ENCODE measurements at regions of chr6 and their contacts with region 1.

Region 1: DNA sequence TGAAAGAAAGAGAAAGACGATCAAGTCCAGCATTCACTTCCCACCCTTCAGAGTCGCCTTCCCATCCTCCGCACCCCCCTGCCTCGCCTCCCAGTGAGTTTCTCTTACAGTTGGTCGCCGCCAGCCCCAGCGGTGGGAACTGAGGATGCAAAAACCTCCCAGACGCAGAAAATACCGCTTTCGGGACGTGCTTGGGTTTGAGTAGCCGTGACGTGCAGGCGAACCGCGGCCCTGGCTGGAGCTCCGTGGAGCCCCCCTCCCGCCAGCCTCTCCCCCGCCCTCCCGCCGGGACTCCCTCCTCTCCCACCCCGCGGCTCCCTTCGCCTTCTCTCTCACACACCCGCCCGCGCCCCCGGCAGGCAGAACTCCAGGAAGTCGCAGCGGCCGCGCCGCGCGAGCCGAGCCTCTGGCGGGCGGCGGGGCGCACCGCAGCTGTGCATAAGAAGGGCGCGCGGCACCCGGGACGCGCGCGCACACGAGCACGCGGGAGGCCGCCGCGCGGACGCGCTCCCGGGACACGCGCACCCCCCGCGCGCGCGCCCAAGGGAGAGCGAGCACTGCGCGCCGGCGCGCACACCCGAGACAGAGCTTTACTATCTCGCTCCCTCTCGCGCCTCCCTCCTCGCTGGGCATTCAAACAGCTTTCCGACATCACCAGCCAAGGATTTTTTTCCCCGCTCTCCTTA is at the start of gene ADGRB3:
- DNase-seq: peak; percentile 25 to 43
- ATAC-seq: peak; percentile 68 to 69
- H3K4me3 ChIP-seq: peak within 1 kb of the TSS; percentile 63 to 88 (median 70)
- H3K27ac ChIP-seq: peak within 1 kb of the TSS; percentile 66 to 75 (median 72)
- H3K4me1 ChIP-seq: peaks cover 0 to 18% of the 10 kb centered on the region in 2 donors
- H3K27me3 ChIP-seq: peaks cover 0 to 11% (median 3%) of the 10 kb centered on the region in 3 donors
- CTCF ChIP-seq: peak in 1 of 5 experiments; percentile 23
- POLR2A ChIP-seq: peak; percentile 26 to 31
- total RNA-seq, gene ADGRB3: 0.56 to 0.58 (median 0.58) TPM in 3 of 4 donors, not detected in the other

Region 2: DNA sequence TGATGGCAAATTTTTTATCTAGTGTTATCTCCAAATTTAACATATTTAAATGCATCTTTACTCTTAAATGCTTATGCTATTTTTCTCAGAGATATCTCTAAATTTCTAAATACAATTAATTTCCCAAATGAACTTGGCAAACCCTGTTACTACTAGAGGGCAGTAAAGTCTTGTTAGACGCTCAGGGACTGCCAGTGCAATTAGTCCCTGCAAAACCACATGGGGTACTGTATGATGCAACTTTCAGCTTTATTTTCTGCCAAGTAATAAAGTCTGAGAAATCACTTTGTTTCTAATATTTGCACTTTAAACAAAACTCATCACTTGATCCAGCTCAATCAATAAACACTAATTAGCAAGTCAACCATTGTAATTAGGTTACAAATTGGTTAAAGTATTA is 75.8 kb before region 1 on chr6:
- in situ Hi-C with region 1: no loop called
- intact Hi-C with region 1: no loop called
- DNase-seq: no peak
- ATAC-seq: no peak
- H3K4me3 ChIP-seq: no peak overlapping the region
- H3K27ac ChIP-seq: no peak overlapping the region
- H3K4me1 ChIP-seq: no peaks in the 10 kb centered on the region
- H3K27me3 ChIP-seq: no peaks in the 10 kb centered on the region
- CTCF ChIP-seq: no peak
- POLR2A ChIP-seq: no peak

Region 3: GRCh38 chr6:68593564-68593963 is 41.3 kb before region 1 on chr6:
- in situ Hi-C with region 1: no loop called
- intact Hi-C with region 1: no loop called
- DNase-seq: no peak
- ATAC-seq: no peak
- H3K4me3 ChIP-seq: no peak overlapping the region
- H3K27ac ChIP-seq: no peak overlapping the region
- H3K4me1 ChIP-seq: no peaks in the 10 kb centered on the region
- H3K27me3 ChIP-seq: no peaks in the 10 kb centered on the region
- CTCF ChIP-seq: no peak
- POLR2A ChIP-seq: no peak

Region 4: GRCh38 chr6:68756454-68757375 is 121.8 kb after region 1 on chr6:
- in situ Hi-C with region 1: no loop called
- intact Hi-C with region 1: no loop called
- DNase-seq: no peak
- ATAC-seq: peak in 1 of 2 donors; percentile 30
- H3K4me3 ChIP-seq: no peak overlapping the region
- H3K27ac ChIP-seq: no peak overlapping the region
- H3K4me1 ChIP-seq: peaks cover 0 to 10% of the 10 kb centered on the region in 2 donors
- H3K27me3 ChIP-seq: no peaks in the 10 kb centered on the region
- CTCF ChIP-seq: no peak
- POLR2A ChIP-seq: no peak

Region 5: GRCh38 chr6:68778356-68779020 is 143.6 kb after region 1 on chr6:
- in situ Hi-C with region 1: loop called in 1 of 4 experiments (anchors 10 kb)
- intact Hi-C with region 1: loop called (anchors 2 kb)
- DNase-seq: no peak
- ATAC-seq: no peak
- H3K4me3 ChIP-seq: no peak overlapping the region
- H3K27ac ChIP-seq: no peak overlapping the region
- H3K4me1 ChIP-seq: no peaks in the 10 kb centered on the region
- H3K27me3 ChIP-seq: no peaks in the 10 kb centered on the region
- CTCF ChIP-seq: peak in 3 of 5 experiments; percentile 33 to 49 (median 39)
- POLR2A ChIP-seq: no peak

Region 6: GRCh38 chr6:68967549-68968300 is 332.9 kb after region 1 on chr6:
- in situ Hi-C with region 1: loop called in 2 of 4 experiments (anchors 25 kb)
- intact Hi-C with region 1: loop called (anchors 10 kb)
- DNase-seq: peak; percentile 12 to 17
- ATAC-seq: peak in 1 of 2 donors; percentile 49
- H3K4me3 ChIP-seq: no peak overlapping the region
- H3K27ac ChIP-seq: no peak overlapping the region
- H3K4me1 ChIP-seq: no peaks in the 10 kb centered on the region
- H3K27me3 ChIP-seq: no peaks in the 10 kb centered on the region
- CTCF ChIP-seq: peak; percentile 31 to 80 (median 62)
- POLR2A ChIP-seq: no peak